ENCODE measurements at regions of chr3 and their contacts with region 1.

Region 1: GRCh38 chr3:15427182-15427880 is at the starts of genes EAF1 and METTL6:
- DNase-seq: peak; percentile 31 to 91
- H3K4me3 ChIP-seq: peak within 1 kb of the TSS; percentile 78 to 93
- H3K27ac ChIP-seq: peak within 1 kb of the TSS; percentile 86 to 90
- H3K4me1 ChIP-seq: peaks cover 5 to 10% of the 10 kb centered on the region in 2 donors
- H3K27me3 ChIP-seq: no peaks in the 10 kb centered on the region
- CTCF ChIP-seq: peak in 2 of 3 experiments; percentile 12 to 22
- total RNA-seq, gene EAF1: 5.2 TPM
- total RNA-seq, gene METTL6: 8.0 TPM

Region 2: GRCh38 chr3:15276028-15276724 is 151.2 kb before region 1 on chr3:
- intact Hi-C with region 1: no loop called
- DNase-seq: peak in 1 of 2 donors; percentile 45
- H3K4me3 ChIP-seq: no peak overlapping the region
- H3K27ac ChIP-seq: no peak overlapping the region
- H3K4me1 ChIP-seq: peaks cover 0 to 4% of the 10 kb centered on the region in 2 donors
- H3K27me3 ChIP-seq: no peaks in the 10 kb centered on the region
- CTCF ChIP-seq: no peak

Region 3: GRCh38 chr3:15300323-15301078 is 126.8 kb before region 1 on chr3:
- intact Hi-C with region 1: no loop called
- DNase-seq: peak in 1 of 2 donors; percentile 72
- H3K4me3 ChIP-seq: no peak overlapping the region
- H3K27ac ChIP-seq: peak overlapping the region; percentile 44 to 67
- H3K4me1 ChIP-seq: peaks cover 0 to 27% of the 10 kb centered on the region in 2 donors
- H3K27me3 ChIP-seq: no peaks in the 10 kb centered on the region
- CTCF ChIP-seq: no peak

Region 4: DNA sequence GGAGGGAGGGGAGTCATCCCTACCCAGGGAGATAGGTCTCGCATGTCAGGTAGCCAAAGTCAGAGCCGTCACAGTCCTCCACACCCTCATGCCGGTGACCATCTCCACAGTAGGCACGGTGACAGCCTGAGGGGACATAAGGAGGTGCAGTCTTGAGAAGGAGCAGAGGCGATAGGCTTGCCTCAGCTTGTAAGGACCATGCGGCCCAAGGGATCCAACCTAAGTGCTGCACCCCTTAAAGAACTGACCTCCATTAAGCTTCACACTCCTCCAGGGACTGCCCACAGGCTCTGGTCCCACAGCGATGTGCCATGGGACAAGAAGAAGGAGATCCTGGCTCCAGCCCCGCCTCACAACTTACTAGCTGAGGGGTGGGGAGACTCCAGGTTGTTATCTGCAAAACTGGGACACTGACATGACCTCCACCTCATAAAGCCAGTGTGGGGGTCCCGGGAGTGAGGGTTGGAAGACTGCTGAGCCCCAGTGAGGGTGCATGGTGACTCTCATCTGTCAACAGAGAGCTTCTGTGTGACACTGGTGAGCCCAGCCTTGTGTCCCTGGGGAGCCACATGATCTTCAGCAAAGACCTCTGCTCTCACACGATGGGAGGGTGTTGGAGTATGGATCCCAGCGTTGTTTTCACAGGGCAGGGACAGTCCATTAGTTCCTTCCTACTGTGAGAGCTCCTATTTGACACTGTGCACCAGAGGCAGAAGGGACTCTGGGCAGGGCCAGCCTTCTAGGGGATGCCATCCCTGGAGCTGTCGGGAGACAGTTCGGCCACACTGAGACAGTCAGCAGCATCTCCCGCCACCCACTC is 26.7 kb after region 1 on chr3:
- intact Hi-C with region 1: no loop called
- DNase-seq: no peak
- H3K4me3 ChIP-seq: no peak overlapping the region
- H3K27ac ChIP-seq: no peak overlapping the region
- H3K4me1 ChIP-seq: no peaks in the 10 kb centered on the region
- H3K27me3 ChIP-seq: no peaks in the 10 kb centered on the region
- CTCF ChIP-seq: no peak

Region 5: GRCh38 chr3:15557511-15557946 is 130.2 kb after region 1 on chr3:
- intact Hi-C with region 1: loop called (anchors 2 kb)
- DNase-seq: peak in 1 of 2 donors; percentile 77
- H3K4me3 ChIP-seq: no peak overlapping the region
- H3K27ac ChIP-seq: peak overlapping the region in 1 of 2 donors; percentile 43
- H3K4me1 ChIP-seq: no peaks in the 10 kb centered on the region
- H3K27me3 ChIP-seq: no peaks in the 10 kb centered on the region
- CTCF ChIP-seq: peak; percentile 41 to 70 (median 48)